Activated CD4-positive, alpha-beta T cell treated with anti-CD3 and anti-CD28 coated beads for 36 hours (primary cell): ENCODE measurements at regions of chr4 and their contacts with region 1.

Region 1: DNA sequence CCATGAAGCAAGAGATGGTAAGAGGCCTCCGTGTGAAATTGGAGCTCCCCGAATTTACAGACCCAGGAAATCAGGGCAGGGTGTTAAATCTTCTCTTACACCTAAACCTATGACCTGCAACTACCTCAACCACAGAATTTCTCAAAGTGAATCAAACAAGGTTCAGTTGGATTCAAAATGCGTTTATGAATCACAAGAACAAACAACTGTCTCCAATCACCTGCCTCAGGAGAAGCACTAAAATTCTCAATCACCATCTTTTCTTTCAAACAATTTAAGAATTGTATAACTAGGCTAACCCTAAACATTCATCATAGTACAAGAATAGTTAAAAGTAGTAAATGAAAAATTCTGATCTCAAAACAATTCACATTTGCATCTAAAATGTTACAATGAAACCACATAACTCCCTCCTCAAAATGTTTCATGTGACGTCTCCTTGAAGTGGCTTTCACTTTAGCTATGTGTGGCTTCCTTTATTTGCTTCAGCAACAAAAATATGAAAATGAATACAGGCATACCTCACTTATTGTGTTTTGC is 19.2 kb downstream of the PPP3CA start:
- DNase-seq: peak; percentile 27
- ATAC-seq: peak; percentile 90
- H3K4me3 Mint-ChIP-seq: peak overlapping the region; percentile 41
- H3K27ac Mint-ChIP-seq: peak overlapping the region; percentile 37
- H3K4me1 Mint-ChIP-seq: peaks cover 37% of the 10 kb centered on the region
- H3K27me3 Mint-ChIP-seq: peaks cover 24% of the 10 kb centered on the region

Region 2: DNA sequence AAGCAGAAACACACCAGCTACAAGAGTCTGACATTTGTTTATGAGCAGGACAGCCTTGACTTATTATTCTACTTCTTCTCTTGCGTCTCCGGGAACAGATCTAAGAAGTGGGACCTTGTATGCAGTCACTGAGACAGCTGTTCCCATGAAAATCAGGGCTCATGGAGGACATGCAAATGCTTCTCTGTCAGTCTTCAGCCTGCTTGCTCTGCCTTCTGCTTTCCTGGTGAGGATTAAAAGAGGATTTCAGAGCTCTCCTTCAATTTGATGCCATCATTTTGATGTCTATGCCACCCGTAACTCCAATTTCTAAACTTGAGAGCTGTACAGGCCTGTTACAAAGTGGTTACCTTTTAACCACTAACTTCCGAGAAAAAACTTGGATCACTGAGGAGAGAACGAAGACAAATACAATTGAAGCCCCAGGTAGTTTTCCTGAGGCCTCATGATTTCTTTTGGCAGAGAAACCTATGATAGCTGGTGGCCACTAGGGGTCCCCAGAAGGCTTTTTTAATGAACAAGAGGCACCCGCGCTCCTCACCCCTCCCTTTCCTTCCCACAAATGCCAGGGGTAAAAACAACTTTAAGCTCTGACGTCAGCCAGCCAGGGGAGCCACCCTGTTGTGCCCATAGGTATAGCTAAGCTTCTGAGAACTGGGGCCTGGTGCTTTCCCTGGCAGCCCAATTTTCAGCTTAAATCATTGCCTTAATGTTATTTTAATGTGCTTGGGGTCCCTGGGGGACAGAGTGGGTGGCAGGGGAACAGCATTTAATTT is 1234.9 kb before region 1 on chr4:
- CTCF ChIA-PET with region 1: no interaction called
- POLR2A ChIA-PET with region 1: no interaction called
- intact Hi-C with region 1: no loop called
- DNase-seq: peak; percentile 94
- ATAC-seq: peak; percentile 94
- H3K4me3 Mint-ChIP-seq: peak overlapping the region; percentile 33
- H3K27ac Mint-ChIP-seq: peak overlapping the region; percentile 94
- H3K4me1 Mint-ChIP-seq: peaks cover 56% of the 10 kb centered on the region
- H3K27me3 Mint-ChIP-seq: peaks cover 1% of the 10 kb centered on the region

Region 3: GRCh38 chr4:101020956-101021355 is 307.2 kb before region 1 on chr4:
- CTCF ChIA-PET with region 1: no interaction called
- POLR2A ChIA-PET with region 1: no interaction called
- intact Hi-C with region 1: loop called in 1 of 2 experiments (anchors 5 kb)
- DNase-seq: no peak
- ATAC-seq: peak; percentile 70
- H3K4me3 Mint-ChIP-seq: no peak overlapping the region
- H3K27ac Mint-ChIP-seq: peak overlapping the region; percentile 64
- H3K4me1 Mint-ChIP-seq: peaks cover 50% of the 10 kb centered on the region
- H3K27me3 Mint-ChIP-seq: no peaks in the 10 kb centered on the region

Region 4: GRCh38 chr4:101604976-101605375 is 276.8 kb after region 1 on chr4:
- CTCF ChIA-PET with region 1: no interaction called
- POLR2A ChIA-PET with region 1: no interaction called
- intact Hi-C with region 1: no loop called
- DNase-seq: no peak
- ATAC-seq: no peak
- H3K4me3 Mint-ChIP-seq: no peak overlapping the region
- H3K27ac Mint-ChIP-seq: no peak overlapping the region
- H3K4me1 Mint-ChIP-seq: no peaks in the 10 kb centered on the region
- H3K27me3 Mint-ChIP-seq: no peaks in the 10 kb centered on the region

Region 5: DNA sequence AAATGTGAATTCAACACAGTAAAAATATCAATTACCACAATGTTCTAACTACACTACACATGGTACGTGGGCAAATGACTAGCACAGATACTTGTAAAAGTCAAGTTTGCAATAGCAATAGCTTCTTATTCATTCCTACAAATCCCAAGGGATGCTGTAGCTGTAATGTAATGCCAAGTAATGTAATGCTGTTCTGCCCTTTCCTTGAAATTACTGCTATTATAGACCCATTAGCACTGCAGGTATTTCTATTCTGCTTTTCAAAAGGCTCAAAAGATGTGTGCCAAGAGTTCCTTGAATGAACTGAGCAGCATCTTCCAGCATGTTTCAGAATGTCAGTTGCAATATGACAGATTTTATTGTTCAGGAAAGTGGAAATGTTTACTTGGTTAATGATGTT is 332.5 kb after region 1 on chr4:
- CTCF ChIA-PET with region 1: no interaction called
- POLR2A ChIA-PET with region 1: no interaction called
- intact Hi-C with region 1: no loop called
- DNase-seq: no peak
- ATAC-seq: no peak
- H3K4me3 Mint-ChIP-seq: no peak overlapping the region
- H3K27ac Mint-ChIP-seq: no peak overlapping the region
- H3K4me1 Mint-ChIP-seq: no peaks in the 10 kb centered on the region
- H3K27me3 Mint-ChIP-seq: peaks cover 7% of the 10 kb centered on the region